Activated T-helper 2 cell treated with anti-CD3 and anti-CD28 coated beads, Interferon-gamma antibody, Interleukin-2, Interleukin-4, amounts not matched to agents 10 μg/mL and 5 μg/mL and 100 μg/mL, durations not matched to agents 14 hours and 24 hours and 36 hours (primary cell): ENCODE measurements at regions of chr2 and their contacts with region 1.

Region 1: GRCh38 chr2:216195565-216196029 is 86.4 kb downstream of the XRCC5 start:
- DNase-seq: no peak
- H3K4me3 Mint-ChIP-seq: no peak overlapping the region
- H3K27ac Mint-ChIP-seq: peak overlapping the region; percentile 87
- H3K4me1 Mint-ChIP-seq: peaks cover 39% of the 10 kb centered on the region
- H3K27me3 Mint-ChIP-seq: no peaks in the 10 kb centered on the region

Region 2: DNA sequence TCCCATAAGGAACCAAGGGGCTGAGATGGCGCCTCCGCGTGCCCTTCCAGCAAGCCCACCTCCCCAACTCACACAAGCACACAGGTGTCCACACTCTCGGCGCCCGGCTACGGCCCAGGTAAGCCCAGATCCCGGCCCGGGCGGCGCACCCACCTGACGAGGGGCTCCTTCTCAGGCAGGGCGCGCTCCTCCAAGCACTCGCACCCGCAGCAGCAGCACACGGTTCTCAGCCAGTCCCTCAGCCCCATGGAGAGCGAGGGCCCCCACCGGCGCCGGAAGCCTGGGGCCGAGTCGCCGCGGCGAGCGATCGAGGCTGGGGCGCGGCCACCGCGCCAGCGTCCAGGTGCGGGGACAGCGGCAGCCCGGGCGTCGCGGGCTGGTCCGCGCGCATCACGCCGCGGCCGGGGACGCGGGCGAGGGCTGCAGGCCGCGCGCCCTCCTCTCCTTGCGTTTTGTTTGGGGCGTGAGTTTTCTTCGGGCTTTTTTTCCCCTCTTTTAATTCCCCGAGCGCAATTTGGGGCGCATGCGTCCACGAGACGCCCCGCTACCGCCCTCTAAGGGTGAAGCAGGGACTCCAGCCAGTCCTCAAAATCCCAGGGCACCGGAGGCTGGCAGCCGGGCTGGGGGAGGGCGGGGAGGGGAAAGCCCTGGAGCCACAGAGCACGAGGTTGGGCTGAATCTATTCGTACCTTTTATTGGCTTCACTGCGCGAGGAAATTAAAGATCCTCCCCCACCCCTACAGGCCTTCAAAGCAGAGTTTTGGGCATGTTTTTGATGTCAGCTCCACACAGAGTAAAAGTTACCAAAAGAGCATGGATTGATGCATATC is 182.3 kb before region 1 on chr2 and contains the start of gene MREG:
- intact Hi-C with region 1: no loop called
- DNase-seq: peak; percentile 79
- H3K4me3 Mint-ChIP-seq: peak within 1 kb of the TSS; percentile 90
- H3K27ac Mint-ChIP-seq: peak within 1 kb of the TSS; percentile 62
- H3K4me1 Mint-ChIP-seq: peaks cover 51% of the 10 kb centered on the region
- H3K27me3 Mint-ChIP-seq: no peaks in the 10 kb centered on the region
- total RNA-seq, gene MREG: 15.3 and 15.7 TPM in 2 replicates

Region 3: DNA sequence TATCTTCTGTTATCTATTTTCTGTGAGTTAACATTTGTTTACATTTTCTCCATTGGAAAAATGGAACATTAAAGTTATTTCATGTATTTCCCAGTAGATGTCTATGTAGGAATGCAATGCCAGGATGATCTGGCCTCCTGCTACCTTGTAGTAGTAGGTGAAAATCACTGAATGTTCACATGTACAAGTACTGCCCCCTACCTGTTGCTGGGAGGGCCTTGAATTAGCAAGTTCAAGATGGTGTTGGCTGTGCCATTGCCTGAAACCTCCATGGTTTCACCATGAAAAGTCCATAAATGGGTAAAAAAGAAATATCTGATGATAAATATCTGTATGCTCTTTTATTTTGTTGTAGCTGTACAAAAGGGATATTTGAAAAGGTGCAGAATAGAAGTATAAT is 55.7 kb before region 1 on chr2:
- intact Hi-C with region 1: loop called (anchors 5 kb)
- DNase-seq: no peak
- H3K4me3 Mint-ChIP-seq: no peak overlapping the region
- H3K27ac Mint-ChIP-seq: no peak overlapping the region
- H3K4me1 Mint-ChIP-seq: peaks cover 38% of the 10 kb centered on the region
- H3K27me3 Mint-ChIP-seq: no peaks in the 10 kb centered on the region

Region 4: DNA sequence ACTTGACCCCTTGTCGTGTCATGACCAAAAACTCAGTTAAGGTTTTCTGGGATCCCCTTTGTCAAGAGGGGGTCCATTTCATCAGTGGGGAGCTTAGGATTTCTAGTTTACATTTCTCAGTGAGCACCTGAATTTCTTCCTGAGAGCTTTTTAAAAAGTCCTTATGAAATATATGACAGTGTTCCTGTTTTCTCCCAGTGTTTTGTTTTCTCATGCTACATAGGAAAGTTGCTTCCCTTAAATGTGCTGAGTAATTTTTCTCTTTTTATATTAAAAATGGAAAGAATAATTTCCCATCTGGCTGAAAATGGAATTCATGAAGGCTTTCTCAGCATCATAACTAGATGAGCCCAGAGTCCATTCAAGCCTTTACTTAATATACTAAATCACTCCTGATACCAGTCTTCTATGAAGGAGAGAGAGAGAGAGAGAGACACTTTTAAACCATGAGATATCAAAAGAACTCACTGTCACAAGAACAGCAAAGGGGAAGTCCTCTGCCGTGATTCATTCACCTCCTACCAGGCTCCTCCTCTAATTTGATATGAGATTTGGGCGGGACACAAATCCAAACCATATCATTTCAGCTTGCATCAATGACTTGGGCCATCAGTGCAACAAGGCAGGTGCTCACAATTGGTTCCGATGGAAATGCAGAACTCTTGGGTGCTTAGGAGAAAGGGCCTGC is 25.4 kb before region 1 on chr2:
- intact Hi-C with region 1: loop called (anchors 2 kb)
- DNase-seq: no peak
- H3K4me3 Mint-ChIP-seq: no peak overlapping the region
- H3K27ac Mint-ChIP-seq: no peak overlapping the region
- H3K4me1 Mint-ChIP-seq: peaks cover 20% of the 10 kb centered on the region
- H3K27me3 Mint-ChIP-seq: no peaks in the 10 kb centered on the region

Region 5: DNA sequence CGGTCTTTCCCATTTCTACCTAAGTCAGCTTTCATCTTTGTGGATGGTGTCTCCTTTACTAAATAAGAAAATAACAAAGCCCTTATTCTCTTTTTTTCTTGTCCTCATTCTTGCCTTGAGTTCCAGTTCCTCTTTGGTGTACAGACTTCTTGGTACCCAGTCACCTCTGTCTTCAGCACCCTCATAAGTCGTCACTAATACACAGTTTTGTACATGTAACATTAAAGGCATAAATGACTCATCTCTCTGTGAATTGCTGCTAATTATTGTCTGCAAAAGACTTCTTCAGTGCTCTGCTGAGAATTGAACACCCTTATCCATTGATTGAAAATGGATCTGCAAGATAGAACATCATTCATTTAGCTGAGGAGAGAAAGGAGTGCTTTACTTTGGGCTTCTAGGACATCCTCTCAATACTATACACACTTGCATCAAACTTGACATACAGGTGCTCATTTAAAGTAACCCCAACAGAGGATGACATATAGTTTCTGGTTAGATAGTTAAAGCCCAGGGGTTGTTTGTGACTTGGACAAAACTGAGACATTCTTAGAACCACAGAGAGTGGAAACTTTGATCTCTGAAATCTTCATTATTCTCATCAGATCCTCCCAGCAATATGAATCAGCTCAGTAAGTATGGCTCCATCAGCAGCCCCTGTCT is 10.6 kb after region 1 on chr2:
- intact Hi-C with region 1: loop called (anchors 1 kb)
- DNase-seq: no peak
- H3K4me3 Mint-ChIP-seq: no peak overlapping the region
- H3K27ac Mint-ChIP-seq: peak overlapping the region; percentile 91
- H3K4me1 Mint-ChIP-seq: peaks cover 42% of the 10 kb centered on the region
- H3K27me3 Mint-ChIP-seq: no peaks in the 10 kb centered on the region

Region 6: GRCh38 chr2:216216951-216217903 is 21.6 kb after region 1 on chr2:
- intact Hi-C with region 1: loop called (anchors 1 kb)
- DNase-seq: no peak
- H3K4me3 Mint-ChIP-seq: no peak overlapping the region
- H3K27ac Mint-ChIP-seq: peak overlapping the region; percentile 46
- H3K4me1 Mint-ChIP-seq: peaks cover 57% of the 10 kb centered on the region
- H3K27me3 Mint-ChIP-seq: no peaks in the 10 kb centered on the region

Region 7: GRCh38 chr2:216287251-216287650 is 91.7 kb after region 1 on chr2:
- intact Hi-C with region 1: no loop called
- DNase-seq: no peak
- H3K4me3 Mint-ChIP-seq: no peak overlapping the region
- H3K27ac Mint-ChIP-seq: no peak overlapping the region
- H3K4me1 Mint-ChIP-seq: no peaks in the 10 kb centered on the region
- H3K27me3 Mint-ChIP-seq: no peaks in the 10 kb centered on the region

Region 8: GRCh38 chr2:216464104-216464720 is 268.6 kb after region 1 on chr2:
- intact Hi-C with region 1: no loop called
- DNase-seq: no peak
- H3K4me3 Mint-ChIP-seq: no peak overlapping the region
- H3K27ac Mint-ChIP-seq: no peak overlapping the region
- H3K4me1 Mint-ChIP-seq: no peaks in the 10 kb centered on the region
- H3K27me3 Mint-ChIP-seq: no peaks in the 10 kb centered on the region